Left cardiac atrium (tissue), 4 donors: ENCODE measurements at regions of chr2 and their contacts with region 1.

Region 1: GRCh38 chr2:8412586-8412985 is 269.3 kb upstream of the ID2 start:
- DNase-seq: peak; percentile 68
- ATAC-seq: peak; percentile 26 to 78

Region 2: DNA sequence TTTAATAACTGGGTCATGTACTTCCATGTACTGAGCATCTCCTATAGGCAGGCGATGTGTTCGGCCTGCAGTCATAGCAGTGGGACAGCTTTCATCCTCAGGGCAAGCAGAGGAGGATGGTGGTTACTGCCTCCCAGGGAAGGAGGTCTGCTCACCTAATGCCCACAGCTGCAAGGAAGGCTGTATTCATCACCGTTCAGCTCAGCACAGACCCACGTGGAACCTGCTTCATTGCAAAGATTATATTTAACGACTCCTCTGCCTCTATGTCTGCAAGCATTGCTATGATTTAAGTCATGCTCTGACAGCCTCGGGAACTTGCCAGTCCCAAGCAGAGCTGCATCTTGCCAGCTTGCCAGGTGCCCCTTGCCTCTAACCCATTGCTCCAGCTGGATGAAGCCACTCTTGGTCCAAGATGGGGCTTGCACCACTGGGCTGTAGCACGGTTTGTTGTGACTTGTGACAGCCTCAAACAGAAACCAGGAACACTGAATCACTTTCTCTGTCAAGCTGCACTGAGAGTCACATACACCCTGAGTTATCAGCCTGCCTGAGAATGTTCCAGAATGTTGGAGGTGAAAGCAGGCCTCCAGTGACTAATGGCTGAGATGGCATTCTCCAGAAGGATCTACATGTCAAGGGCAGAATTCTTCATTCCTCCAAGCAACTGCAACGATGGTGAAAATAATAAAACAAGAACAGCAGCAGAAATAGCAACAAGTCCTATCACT is 381.8 kb before region 1 on chr2:
- intact Hi-C with region 1: no loop called
- DNase-seq: no peak
- ATAC-seq: no peak

Region 3: GRCh38 chr2:8234757-8235374 is 177.7 kb before region 1 on chr2:
- intact Hi-C with region 1: loop called in 1 of 2 experiments (anchors 10 kb)
- DNase-seq: no peak
- ATAC-seq: no peak

Region 4: DNA sequence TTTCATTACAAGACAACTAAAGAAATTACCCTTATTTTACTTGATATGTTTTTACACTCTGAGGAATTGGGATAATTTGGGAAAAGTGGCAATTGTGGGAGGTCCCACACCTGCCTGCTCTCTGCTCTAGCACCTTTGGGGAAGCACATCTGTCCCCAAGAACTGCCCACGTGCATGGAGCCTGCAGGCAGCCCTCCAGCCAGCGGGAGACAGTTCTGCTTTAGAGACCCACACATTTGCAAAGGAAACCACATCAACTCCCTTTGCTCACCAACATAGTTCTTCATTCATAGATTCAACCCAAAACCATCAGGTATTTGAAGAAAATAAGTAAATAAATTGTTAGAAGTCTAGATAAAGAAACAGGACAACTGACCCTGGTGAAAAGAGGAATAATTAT is 29.4 kb after region 1 on chr2:
- intact Hi-C with region 1: no loop called
- DNase-seq: no peak
- ATAC-seq: no peak

Region 5: DNA sequence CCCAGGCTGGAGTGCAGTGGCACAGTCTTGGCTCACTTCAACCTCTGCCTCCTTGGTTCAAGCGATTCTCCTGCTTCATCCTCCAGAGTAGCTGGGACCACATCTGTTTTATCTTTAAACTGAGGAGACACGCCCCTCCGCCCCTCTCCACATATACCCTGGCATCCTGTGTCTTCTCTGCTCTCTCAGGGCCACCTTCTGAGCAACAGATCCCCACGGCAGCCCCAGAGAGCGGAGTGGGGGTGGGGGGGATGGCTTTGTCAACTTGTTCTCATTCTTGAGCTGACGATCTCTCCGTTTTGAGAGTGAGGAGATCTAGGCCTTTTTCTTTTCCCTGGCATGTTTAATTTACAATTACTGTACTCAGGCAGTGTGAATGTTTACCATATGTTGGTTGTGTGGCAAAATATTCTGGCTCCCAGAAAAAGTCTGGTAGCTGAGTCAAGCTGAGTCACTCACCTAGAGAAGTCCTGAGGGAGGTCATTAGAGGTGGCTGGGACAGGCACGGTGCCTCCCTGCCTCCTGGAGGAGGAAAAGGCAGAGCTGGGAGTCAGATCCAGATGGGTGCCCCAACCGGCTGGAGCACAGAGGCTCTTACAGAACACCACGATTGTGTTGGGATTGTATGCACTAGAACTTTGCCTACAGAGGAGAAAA is 249.8 kb after region 1 on chr2:
- intact Hi-C with region 1: no loop called
- DNase-seq: no peak
- ATAC-seq: peak in 1 of 2 donors; percentile 31